IMR-90 (cell line): ENCODE measurements at regions of chr9 and their contacts with region 1.

Region 1: DNA sequence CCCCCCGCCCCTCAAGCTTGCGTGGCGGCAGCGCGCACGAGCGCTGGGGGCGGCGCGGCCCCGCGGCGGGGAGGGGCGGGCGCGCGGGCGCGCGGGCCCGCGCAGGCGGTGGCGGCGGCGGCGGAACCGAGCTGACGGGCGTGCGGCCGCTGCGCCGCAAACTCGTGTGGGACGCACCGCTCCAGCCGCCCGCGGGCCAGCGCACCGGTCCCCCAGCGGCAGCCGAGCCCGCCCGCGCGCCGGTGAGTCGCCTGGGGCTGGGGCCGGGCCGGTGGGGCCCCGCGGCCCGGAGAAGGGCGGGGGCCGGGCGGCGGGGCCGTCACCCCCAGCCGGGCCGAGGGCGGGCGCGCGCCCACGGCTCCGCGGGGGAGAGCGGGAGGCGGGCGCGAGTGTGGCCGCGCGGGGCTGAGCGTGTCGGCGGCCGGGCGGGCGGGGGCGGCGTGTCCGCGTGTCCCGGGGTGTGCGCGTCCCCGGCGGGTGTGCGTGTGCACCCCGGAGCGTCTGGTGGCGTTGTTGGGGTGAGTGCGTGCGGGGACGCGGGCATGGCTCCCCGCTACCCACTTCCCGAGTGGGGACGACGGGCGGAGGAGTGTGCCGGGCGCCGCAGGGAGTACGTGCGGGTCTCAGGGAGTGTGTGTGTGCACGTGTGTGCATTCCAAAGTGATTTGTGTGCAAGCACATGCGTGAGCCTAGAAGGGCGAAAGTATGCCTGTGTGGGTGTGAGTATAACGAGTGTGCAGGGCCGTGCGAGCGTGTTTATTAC is at the start of gene NEK6:
- DNase-seq: peak; percentile 84
- ATAC-seq: peak; percentile 26
- H3K4me3 ChIP-seq: peak within 1 kb of the TSS; percentile 78
- H3K27ac ChIP-seq: peak within 1 kb of the TSS; percentile 99
- H3K4me1 ChIP-seq: peaks cover 33% of the 10 kb centered on the region
- H3K27me3 ChIP-seq: no peaks in the 10 kb centered on the region
- CTCF ChIP-seq: no peak
- POLR2A ChIP-seq: peak; percentile 59
- RAD21 ChIP-seq: no peak
- total RNA-seq, gene NEK6: 77.8 and 79.9 TPM in 2 replicates

Region 2: DNA sequence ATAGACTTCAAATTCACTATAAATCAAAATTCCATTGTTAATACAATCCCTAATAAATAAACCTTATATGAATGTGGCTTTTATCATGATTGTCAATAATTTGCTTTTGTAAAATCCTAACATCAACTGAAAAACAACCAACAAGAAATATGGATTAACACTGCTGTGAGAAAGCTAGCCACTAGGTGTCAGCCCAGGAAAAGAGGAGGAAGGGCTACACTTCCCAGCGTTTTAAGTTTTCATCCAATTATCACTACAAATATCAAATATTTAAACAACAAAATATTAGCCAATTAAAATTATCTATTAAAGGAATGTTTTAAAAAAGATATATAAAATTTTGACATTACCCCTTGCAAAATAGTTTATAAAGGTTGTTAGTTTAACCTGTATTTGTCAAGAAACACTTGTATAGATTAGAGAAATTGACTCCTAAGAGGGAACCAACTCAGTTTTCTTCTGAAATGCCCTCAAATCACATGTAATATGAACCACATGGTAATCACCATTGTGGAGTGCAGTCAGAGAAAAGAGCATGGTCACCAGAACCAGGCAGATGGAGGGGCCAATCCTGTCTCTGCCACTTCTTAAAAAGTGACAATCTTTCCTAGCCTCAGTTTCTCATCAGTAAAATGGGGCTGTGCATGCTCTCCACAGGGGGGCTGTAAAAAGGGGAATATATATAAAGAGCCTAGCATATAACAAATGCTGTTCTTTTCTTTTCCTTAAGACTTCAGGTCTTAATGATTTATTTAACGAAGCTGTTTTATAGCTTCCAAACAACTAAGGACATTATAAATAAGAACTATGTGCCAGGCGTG is 713.8 kb before region 1 on chr9:
- CTCF ChIA-PET with region 1: no interaction called
- POLR2A ChIA-PET with region 1: no interaction called
- dilution Hi-C with region 1: no loop called
- in situ Hi-C with region 1: no loop called
- intact Hi-C with region 1: loop called (anchors 10 kb)
- DNase-seq: peak; percentile 54
- ATAC-seq: peak; percentile 73; the same call in 1 of the 2 replicates
- H3K4me3 ChIP-seq: no peak overlapping the region
- H3K27ac ChIP-seq: no peak overlapping the region
- H3K4me1 ChIP-seq: no peaks in the 10 kb centered on the region
- H3K27me3 ChIP-seq: peaks cover 2% of the 10 kb centered on the region; the same call in 1 of the 2 replicates
- CTCF ChIP-seq: peak; percentile 95
- POLR2A ChIP-seq: peak; percentile 48; the same call in 1 of the 2 replicates
- RAD21 ChIP-seq: peak; percentile 95

Region 3: GRCh38 chr9:123631862-123632261 is 626.2 kb before region 1 on chr9:
- CTCF ChIA-PET with region 1: no interaction called
- POLR2A ChIA-PET with region 1: no interaction called
- dilution Hi-C with region 1: no loop called
- in situ Hi-C with region 1: no loop called
- intact Hi-C with region 1: no loop called
- DNase-seq: no peak
- ATAC-seq: no peak
- H3K4me3 ChIP-seq: no peak overlapping the region
- H3K27ac ChIP-seq: no peak overlapping the region
- H3K4me1 ChIP-seq: no peaks in the 10 kb centered on the region
- H3K27me3 ChIP-seq: no peaks in the 10 kb centered on the region
- CTCF ChIP-seq: no peak
- POLR2A ChIP-seq: no peak
- RAD21 ChIP-seq: no peak

Region 4: GRCh38 chr9:124054582-124055227 is 203.3 kb before region 1 on chr9:
- CTCF ChIA-PET with region 1: no interaction called
- POLR2A ChIA-PET with region 1: no interaction called
- dilution Hi-C with region 1: no loop called
- in situ Hi-C with region 1: no loop called
- intact Hi-C with region 1: loop called (anchors 10 kb)
- DNase-seq: peak; percentile 90
- ATAC-seq: peak; percentile 99
- H3K4me3 ChIP-seq: no peak overlapping the region
- H3K27ac ChIP-seq: no peak overlapping the region
- H3K4me1 ChIP-seq: no peaks in the 10 kb centered on the region
- H3K27me3 ChIP-seq: peaks cover 52% of the 10 kb centered on the region
- CTCF ChIP-seq: no peak
- POLR2A ChIP-seq: no peak
- RAD21 ChIP-seq: peak; percentile 21; the same call in 1 of the 2 replicates

Region 5: DNA sequence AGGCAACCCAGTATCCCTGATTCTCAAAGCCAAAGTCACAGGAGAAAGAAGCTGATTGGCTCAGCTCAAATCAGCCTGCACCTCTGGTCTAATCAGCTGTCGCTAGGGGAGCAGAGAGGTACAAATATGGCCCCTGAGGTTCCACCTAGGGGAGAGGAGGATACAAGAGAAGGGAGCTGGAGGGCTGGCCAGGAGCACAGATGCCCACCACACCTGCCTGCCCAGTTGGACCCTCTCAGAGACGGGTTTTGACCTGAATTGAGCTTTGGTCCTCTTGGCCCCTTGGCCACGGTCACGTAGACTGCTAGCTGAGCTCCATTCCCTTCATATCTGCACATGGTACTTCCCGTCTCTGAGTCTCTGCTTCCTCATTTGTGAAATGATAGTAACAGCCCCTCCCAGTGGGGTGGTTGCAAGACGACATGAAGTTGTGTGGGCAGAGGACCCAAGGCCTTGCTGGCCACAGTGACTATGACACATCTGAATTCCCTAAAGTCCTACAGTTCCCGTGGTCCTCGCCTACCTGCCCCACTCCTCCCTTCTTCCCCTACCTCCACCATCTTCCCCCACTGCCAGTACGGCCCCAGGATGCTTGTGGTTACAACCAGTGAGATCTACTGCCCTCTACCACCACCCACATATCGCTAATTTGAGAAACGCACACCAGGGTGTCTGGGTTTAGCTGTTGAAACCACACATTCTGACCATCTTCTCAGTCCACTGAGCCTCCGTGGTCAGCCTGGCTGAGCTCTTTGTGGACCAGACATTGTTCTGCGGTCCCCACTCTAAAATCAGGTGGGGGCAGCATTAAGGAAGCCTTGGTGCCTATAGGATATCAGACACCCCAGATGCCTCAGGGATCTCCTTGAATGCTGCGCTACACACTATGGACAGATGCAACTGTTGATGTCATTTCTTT is 60.6 kb before region 1 on chr9:
- CTCF ChIA-PET with region 1: no interaction called
- POLR2A ChIA-PET with region 1: interaction called, 10 read pairs
- dilution Hi-C with region 1: no loop called
- in situ Hi-C with region 1: no loop called
- intact Hi-C with region 1: no loop called
- DNase-seq: no peak
- ATAC-seq: no peak
- H3K4me3 ChIP-seq: no peak overlapping the region
- H3K27ac ChIP-seq: no peak overlapping the region
- H3K4me1 ChIP-seq: no peaks in the 10 kb centered on the region
- H3K27me3 ChIP-seq: peaks cover 21% of the 10 kb centered on the region
- CTCF ChIP-seq: no peak
- POLR2A ChIP-seq: no peak
- RAD21 ChIP-seq: no peak

Region 6: GRCh38 chr9:124297553-124297905 is 39.5 kb after region 1 on chr9:
- CTCF ChIA-PET with region 1: no interaction called
- POLR2A ChIA-PET with region 1: no interaction called
- dilution Hi-C with region 1: no loop called
- in situ Hi-C with region 1: no loop called
- intact Hi-C with region 1: no loop called
- DNase-seq: peak; percentile 96
- ATAC-seq: peak; percentile 78
- H3K4me3 ChIP-seq: no peak overlapping the region
- H3K27ac ChIP-seq: peak overlapping the region; percentile 85
- H3K4me1 ChIP-seq: peaks cover 75% of the 10 kb centered on the region
- H3K27me3 ChIP-seq: no peaks in the 10 kb centered on the region
- CTCF ChIP-seq: no peak
- POLR2A ChIP-seq: peak; percentile 31; the same call in 1 of the 2 replicates
- RAD21 ChIP-seq: no peak

Region 7: GRCh38 chr9:124342776-124343485 is 84.9 kb after region 1 on chr9:
- CTCF ChIA-PET with region 1: no interaction called
- POLR2A ChIA-PET with region 1: no interaction called
- dilution Hi-C with region 1: no loop called
- in situ Hi-C with region 1: no loop called
- intact Hi-C with region 1: loop called (anchors 2 kb)
- DNase-seq: peak; percentile 94
- ATAC-seq: peak; percentile 87
- H3K4me3 ChIP-seq: no peak overlapping the region
- H3K27ac ChIP-seq: peak overlapping the region; percentile 91
- H3K4me1 ChIP-seq: peaks cover 20% of the 10 kb centered on the region
- H3K27me3 ChIP-seq: no peaks in the 10 kb centered on the region
- CTCF ChIP-seq: no peak
- POLR2A ChIP-seq: peak; percentile 37; the same call in 1 of the 2 replicates
- RAD21 ChIP-seq: peak; percentile 18; the same call in 1 of the 2 replicates